Caco-2 (cell line): ENCODE measurements at regions of chr4 and their contacts with region 1.

Region 1: DNA sequence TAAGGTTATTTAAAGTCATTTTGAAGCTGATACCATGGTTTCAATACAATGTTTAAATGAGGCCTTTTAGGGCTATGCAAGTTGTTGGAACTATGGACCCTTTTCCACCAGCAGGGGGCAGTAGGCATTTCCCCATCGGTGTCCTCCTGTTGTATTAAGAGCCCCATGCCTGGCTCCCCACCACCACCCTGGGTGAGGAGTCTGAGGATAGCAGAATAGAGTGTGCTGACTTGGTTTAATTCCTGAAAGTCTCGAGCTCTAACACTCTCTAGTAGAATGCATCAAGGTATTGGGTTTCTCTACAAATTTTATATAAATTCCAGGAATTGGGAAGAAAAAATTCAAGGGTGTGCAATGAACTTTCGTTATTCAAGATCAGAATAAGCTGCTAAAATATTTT is 234.8 kb upstream of the JADE1 start:
- DNase-seq: peak; percentile 71 to 84
- H3K4me3 ChIP-seq: no peak overlapping the region
- H3K4me3 Mint-ChIP-seq: no peak overlapping the region
- H3K27ac Mint-ChIP-seq: peak overlapping the region; percentile 81
- H3K4me1 ChIP-seq: peaks cover 41% of the 10 kb centered on the region
- H3K4me1 Mint-ChIP-seq: peaks cover 34% of the 10 kb centered on the region
- H3K27me3 ChIP-seq: no peaks in the 10 kb centered on the region
- H3K27me3 Mint-ChIP-seq: no peaks in the 10 kb centered on the region
- CTCF ChIP-seq: peak; percentile 41 to 77

Region 2: DNA sequence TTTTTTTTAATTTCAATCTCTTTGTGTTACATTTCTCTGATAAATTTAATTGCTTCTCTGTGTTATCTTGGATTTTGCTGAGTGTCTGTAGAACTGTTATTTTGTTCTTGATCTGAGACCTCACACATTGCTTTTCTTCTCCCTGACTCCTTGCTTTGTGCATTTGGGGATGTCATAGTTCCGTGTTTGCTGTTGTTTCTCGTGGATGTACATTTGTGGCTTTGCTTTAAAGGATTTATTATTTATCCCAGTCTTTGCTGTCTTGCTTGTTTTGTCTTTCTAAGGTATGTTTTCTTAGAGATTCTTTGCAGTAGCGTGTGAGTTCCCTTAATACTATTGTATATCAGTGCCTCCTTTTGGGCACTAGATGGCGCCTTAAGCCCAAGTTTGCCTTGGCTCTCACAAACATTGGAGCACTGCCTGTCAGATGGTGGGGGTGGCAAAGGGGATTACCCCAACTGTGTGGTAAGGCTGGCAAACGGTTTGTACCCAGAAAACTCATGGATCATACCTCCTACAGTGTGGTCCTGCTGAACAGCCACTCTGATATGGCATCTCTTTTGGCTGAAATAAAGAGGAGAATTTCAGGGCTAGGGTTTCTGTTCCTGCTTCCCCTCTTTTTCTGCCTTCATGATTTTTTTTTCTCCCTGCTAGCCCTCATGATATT is 383.5 kb before region 1 on chr4:
- CTCF ChIA-PET with region 1: no interaction called
- POLR2A ChIA-PET with region 1: no interaction called
- intact Hi-C with region 1: loop called (anchors 1 kb)
- DNase-seq: peak; percentile 59 to 65
- H3K4me3 ChIP-seq: no peak overlapping the region
- H3K4me3 Mint-ChIP-seq: no peak overlapping the region
- H3K27ac Mint-ChIP-seq: no peak overlapping the region
- H3K4me1 ChIP-seq: 0 out of 2 replicates have a peak, but pooled peaks cover 11% of the 10 kb centered on the region
- H3K4me1 Mint-ChIP-seq: peaks cover 15% of the 10 kb centered on the region
- H3K27me3 ChIP-seq: no peaks in the 10 kb centered on the region
- H3K27me3 Mint-ChIP-seq: no peaks in the 10 kb centered on the region
- CTCF ChIP-seq: peak; percentile 73 to 77

Region 3: DNA sequence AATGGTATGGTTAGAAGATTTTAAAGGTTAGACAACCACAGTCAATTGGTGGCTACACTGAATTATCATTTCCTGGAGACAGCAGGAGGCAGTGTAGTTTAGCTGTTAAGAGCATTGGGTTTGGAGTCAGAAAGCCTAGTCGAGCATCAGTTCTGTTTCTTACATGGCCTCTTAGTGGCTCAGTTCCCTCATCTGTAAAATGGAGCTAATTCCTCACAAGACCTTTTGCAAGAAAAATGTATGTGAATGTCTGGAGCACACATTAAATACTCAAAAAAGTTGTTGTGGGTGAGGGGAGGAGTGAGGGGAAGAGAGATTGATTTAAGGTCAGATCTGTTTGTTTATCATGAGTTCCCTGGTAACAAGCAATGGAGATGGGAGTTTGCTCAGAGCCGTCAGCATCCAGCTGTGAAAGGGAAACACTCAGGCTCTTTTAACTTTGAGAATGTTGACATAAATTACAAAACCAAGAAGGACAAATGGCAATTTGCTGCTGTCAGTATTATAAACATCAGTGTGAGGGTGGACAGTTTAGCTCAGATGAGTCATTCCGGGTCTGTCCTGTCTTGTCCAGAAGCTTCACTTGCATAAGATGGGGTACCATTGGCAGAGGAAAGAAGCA is 188.9 kb before region 1 on chr4:
- CTCF ChIA-PET with region 1: no interaction called
- POLR2A ChIA-PET with region 1: no interaction called
- intact Hi-C with region 1: loop called (anchors 1 kb)
- DNase-seq: no peak
- H3K4me3 ChIP-seq: no peak overlapping the region
- H3K4me3 Mint-ChIP-seq: no peak overlapping the region
- H3K27ac Mint-ChIP-seq: no peak overlapping the region
- H3K4me1 ChIP-seq: peaks cover 32% of the 10 kb centered on the region
- H3K4me1 Mint-ChIP-seq: peaks cover 8% of the 10 kb centered on the region
- H3K27me3 ChIP-seq: no peaks in the 10 kb centered on the region
- H3K27me3 Mint-ChIP-seq: no peaks in the 10 kb centered on the region
- CTCF ChIP-seq: no peak

Region 4: DNA sequence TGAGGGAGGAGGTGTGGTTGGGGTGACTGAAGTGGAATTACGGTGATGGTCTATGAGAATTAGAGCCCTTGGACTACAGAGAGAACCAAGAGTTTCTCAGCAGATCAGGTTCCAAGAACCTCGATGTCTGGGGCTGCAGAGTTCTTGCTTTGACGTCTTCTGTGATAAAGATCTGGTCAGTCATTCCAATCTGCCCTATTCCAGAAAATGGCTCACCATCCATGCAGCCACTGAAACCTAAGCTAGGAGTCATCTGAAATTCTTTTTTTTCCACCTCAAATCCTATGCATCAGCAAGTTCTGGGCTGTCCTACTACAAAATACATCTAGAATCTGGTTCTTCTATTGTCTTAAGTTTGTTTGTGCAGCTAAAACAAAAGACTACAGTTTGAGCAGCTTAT is 32.7 kb before region 1 on chr4:
- CTCF ChIA-PET with region 1: no interaction called
- POLR2A ChIA-PET with region 1: no interaction called
- intact Hi-C with region 1: no loop called
- DNase-seq: no peak
- H3K4me3 ChIP-seq: no peak overlapping the region
- H3K4me3 Mint-ChIP-seq: no peak overlapping the region
- H3K27ac Mint-ChIP-seq: no peak overlapping the region
- H3K4me1 ChIP-seq: no peaks in the 10 kb centered on the region
- H3K4me1 Mint-ChIP-seq: peaks cover 7% of the 10 kb centered on the region
- H3K27me3 ChIP-seq: no peaks in the 10 kb centered on the region
- H3K27me3 Mint-ChIP-seq: no peaks in the 10 kb centered on the region
- CTCF ChIP-seq: no peak

Region 5: DNA sequence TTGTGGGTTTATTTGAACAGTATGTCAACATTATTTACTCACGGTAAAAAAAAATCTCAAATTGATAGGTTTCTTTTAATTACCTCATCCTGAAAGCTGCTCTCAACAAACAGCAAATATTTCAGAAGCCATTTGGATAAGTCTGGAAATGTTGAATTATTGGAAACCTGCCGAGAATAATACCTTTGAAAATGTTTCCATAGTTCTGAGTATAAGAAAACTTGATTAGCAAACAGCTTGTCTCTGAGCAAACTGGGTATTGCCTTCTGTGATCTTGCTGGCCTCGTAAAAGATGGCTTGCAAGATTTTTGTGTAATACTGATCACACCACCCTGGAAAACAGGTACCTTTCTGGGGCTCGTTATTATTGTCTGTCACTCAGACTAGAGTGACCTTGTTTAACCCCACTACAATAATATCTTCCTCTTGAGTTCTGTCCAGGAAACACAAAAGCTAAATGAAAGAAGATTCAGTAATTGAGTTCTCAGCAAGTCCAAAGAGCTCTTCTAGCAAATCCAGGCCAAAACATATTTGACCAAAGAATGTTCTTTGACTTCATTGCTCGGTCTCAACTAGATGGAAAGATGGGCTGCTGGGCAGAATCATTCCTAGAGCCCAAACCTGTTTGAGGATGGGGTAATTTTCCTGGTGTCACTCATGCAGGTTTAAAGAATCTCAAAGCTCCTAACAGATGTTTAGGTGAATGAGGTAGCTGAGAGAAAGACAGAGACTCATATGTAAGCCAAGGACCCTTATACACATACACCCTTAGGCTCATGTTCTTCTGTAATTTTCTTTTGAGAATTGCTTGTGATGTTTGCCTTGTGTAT is 20.8 kb before region 1 on chr4:
- CTCF ChIA-PET with region 1: no interaction called
- POLR2A ChIA-PET with region 1: interaction called, 8 read pairs
- intact Hi-C with region 1: loop called (anchors 2 kb)
- DNase-seq: peak in 1 of 2 experiments; percentile 25
- H3K4me3 ChIP-seq: peak overlapping the region; percentile 63
- H3K4me3 Mint-ChIP-seq: peak overlapping the region; percentile 99
- H3K27ac Mint-ChIP-seq: peak overlapping the region; percentile 98
- H3K4me1 ChIP-seq: peaks cover 19% of the 10 kb centered on the region
- H3K4me1 Mint-ChIP-seq: peaks cover 11% of the 10 kb centered on the region
- H3K27me3 ChIP-seq: no peaks in the 10 kb centered on the region
- H3K27me3 Mint-ChIP-seq: no peaks in the 10 kb centered on the region
- CTCF ChIP-seq: no peak

Region 6: DNA sequence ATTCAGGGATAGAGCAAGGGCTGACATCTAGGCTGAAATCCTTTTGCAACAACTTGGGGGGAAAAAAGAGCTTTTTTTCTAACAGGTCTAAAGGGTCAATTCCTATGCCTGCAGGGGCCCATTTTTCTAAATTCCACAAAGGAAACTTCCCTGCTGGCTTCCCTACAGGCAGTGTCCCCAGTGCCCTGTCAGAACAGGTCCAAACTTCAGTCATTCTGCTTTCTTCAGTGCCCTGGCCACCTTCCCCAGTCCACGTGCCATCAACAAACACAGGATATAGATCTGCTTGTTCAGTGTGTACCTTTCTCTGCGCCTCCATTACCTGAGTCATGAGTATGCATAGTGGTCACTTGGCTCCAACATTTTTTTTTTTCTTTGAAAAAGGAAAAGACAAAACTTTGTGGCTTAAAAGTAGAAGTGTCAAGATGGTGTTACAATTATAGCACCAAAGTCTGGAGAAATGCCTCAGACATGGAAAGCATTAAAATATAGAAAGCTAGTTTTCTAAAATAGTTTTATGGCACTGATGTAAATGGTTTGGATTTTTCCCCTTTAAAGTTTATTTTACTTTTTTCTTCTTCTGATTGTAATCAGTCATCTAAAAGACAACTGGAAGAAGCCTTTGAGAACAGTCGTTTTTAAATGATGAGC is 150.8 kb after region 1 on chr4:
- CTCF ChIA-PET with region 1: no interaction called
- POLR2A ChIA-PET with region 1: no interaction called
- intact Hi-C with region 1: loop called (anchors 5 kb)
- DNase-seq: no peak
- H3K4me3 ChIP-seq: no peak overlapping the region
- H3K4me3 Mint-ChIP-seq: no peak overlapping the region
- H3K27ac Mint-ChIP-seq: no peak overlapping the region
- H3K4me1 ChIP-seq: peaks cover 64% of the 10 kb centered on the region
- H3K4me1 Mint-ChIP-seq: peaks cover 26% of the 10 kb centered on the region
- H3K27me3 ChIP-seq: no peaks in the 10 kb centered on the region
- H3K27me3 Mint-ChIP-seq: no peaks in the 10 kb centered on the region
- CTCF ChIP-seq: no peak

Region 7: GRCh38 chr4:128863312-128864075 is 288.8 kb after region 1 on chr4:
- CTCF ChIA-PET with region 1: no interaction called
- POLR2A ChIA-PET with region 1: no interaction called
- intact Hi-C with region 1: loop called (anchors 2 kb)
- DNase-seq: peak; percentile 73 to 77
- H3K4me3 ChIP-seq: no peak overlapping the region
- H3K4me3 Mint-ChIP-seq: no peak overlapping the region
- H3K27ac Mint-ChIP-seq: peak overlapping the region; percentile 40
- H3K4me1 ChIP-seq: no peaks in the 10 kb centered on the region; the same call in 1 of the 2 replicates
- H3K4me1 Mint-ChIP-seq: peaks cover 23% of the 10 kb centered on the region
- H3K27me3 ChIP-seq: no peaks in the 10 kb centered on the region
- H3K27me3 Mint-ChIP-seq: no peaks in the 10 kb centered on the region
- CTCF ChIP-seq: peak; percentile 77 to 84